ENCODE measurements at regions of chr12 and their contacts with region 1.

Region 1: GRCh38 chr12:67068761-67069450 is 200.3 kb upstream of the CAND1 start:
- DNase-seq: peak; percentile 52 to 79
- H3K4me3 ChIP-seq: peak overlapping the region; percentile 76
- H3K27ac ChIP-seq: peak overlapping the region; percentile 48; the same call in 1 of the 2 replicates
- H3K4me1 ChIP-seq: peaks cover 27% of the 10 kb centered on the region
- H3K27me3 ChIP-seq: no peaks in the 10 kb centered on the region
- CTCF ChIP-seq: no peak

Region 2: GRCh38 chr12:66693901-66694675 is 374.8 kb before region 1 on chr12:
- CTCF ChIA-PET with region 1: no interaction called
- POLR2A ChIA-PET with region 1: no interaction called
- intact Hi-C with region 1: loop called (anchors 10 kb)
- DNase-seq: peak in 1 of 2 experiments; percentile 6
- H3K4me3 ChIP-seq: no peak overlapping the region
- H3K27ac ChIP-seq: no peak overlapping the region
- H3K4me1 ChIP-seq: no peaks in the 10 kb centered on the region
- H3K27me3 ChIP-seq: no peaks in the 10 kb centered on the region
- CTCF ChIP-seq: peak; percentile 73

Region 3: GRCh38 chr12:66901138-66901932 is 167.6 kb before region 1 on chr12:
- CTCF ChIA-PET with region 1: no interaction called
- POLR2A ChIA-PET with region 1: no interaction called
- intact Hi-C with region 1: loop called (anchors 5 kb)
- DNase-seq: no peak
- H3K4me3 ChIP-seq: no peak overlapping the region
- H3K27ac ChIP-seq: no peak overlapping the region
- H3K4me1 ChIP-seq: no peaks in the 10 kb centered on the region
- H3K27me3 ChIP-seq: no peaks in the 10 kb centered on the region
- CTCF ChIP-seq: no peak

Region 4: DNA sequence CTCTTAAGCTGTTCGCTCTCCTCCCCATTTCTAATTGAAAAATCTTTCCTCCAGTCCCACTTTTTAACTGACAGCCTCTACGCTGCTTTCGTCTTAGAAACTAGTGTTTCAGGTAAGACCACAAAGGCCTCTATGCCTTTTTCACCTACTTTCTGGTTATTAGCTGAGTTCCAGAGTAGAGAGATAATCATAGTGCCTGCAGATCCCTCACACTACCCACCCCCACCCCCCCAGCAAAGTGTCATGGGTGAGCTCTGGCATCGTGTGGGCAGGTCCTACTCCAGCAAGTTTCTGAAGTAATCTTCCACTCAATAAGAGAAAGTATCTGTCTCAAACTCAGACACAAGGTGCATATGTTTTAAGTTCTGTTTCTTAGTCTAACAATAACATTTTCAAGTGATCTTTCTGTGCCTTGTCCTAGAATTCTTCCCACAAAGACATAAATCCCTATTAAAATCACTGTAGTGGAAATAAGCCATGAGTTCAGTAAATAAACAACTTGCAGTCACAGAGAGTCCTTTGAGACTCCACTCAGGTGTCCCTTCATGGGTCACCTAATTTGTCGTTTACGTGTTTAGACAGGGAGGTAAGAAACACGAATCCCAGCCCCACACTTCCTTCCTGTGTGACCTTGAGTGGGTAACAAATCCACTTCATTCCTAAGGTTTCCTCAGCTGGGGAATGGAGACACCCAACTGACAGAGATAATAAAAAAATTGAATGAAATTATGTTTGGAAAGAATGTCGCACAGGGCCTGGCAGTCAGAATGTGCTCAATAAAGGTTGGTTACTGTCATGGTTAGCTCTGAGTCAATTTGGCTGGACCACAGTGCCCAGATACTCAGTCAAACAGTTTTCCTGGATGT is 28.7 kb before region 1 on chr12:
- CTCF ChIA-PET with region 1: no interaction called
- POLR2A ChIA-PET with region 1: no interaction called
- intact Hi-C with region 1: no loop called
- DNase-seq: peak in 1 of 2 experiments; percentile 69
- H3K4me3 ChIP-seq: no peak overlapping the region
- H3K27ac ChIP-seq: no peak overlapping the region
- H3K4me1 ChIP-seq: peaks cover 26% of the 10 kb centered on the region
- H3K27me3 ChIP-seq: no peaks in the 10 kb centered on the region
- CTCF ChIP-seq: no peak

Region 5: GRCh38 chr12:67222302-67222701 is 153.4 kb after region 1 on chr12:
- CTCF ChIA-PET with region 1: interaction called, 3 read pairs
- POLR2A ChIA-PET with region 1: no interaction called
- intact Hi-C with region 1: loop called (anchors 10 kb)
- DNase-seq: peak in 1 of 2 experiments; percentile 4
- H3K4me3 ChIP-seq: no peak overlapping the region
- H3K27ac ChIP-seq: no peak overlapping the region
- H3K4me1 ChIP-seq: no peaks in the 10 kb centered on the region
- H3K27me3 ChIP-seq: no peaks in the 10 kb centered on the region
- CTCF ChIP-seq: peak; percentile 60; the same call in 1 of the 2 replicates

Region 6: GRCh38 chr12:67331123-67331522 is 262.2 kb after region 1 on chr12:
- CTCF ChIA-PET with region 1: interaction called, 12 read pairs
- POLR2A ChIA-PET with region 1: no interaction called
- intact Hi-C with region 1: no loop called
- DNase-seq: no peak
- H3K4me3 ChIP-seq: no peak overlapping the region
- H3K27ac ChIP-seq: no peak overlapping the region
- H3K4me1 ChIP-seq: no peaks in the 10 kb centered on the region
- H3K27me3 ChIP-seq: no peaks in the 10 kb centered on the region
- CTCF ChIP-seq: no peak

Measured in PC-9 (cell line).